AG04450 (cell line): ENCODE measurements at regions of chr22 and their contacts with region 1.

Region 1: DNA sequence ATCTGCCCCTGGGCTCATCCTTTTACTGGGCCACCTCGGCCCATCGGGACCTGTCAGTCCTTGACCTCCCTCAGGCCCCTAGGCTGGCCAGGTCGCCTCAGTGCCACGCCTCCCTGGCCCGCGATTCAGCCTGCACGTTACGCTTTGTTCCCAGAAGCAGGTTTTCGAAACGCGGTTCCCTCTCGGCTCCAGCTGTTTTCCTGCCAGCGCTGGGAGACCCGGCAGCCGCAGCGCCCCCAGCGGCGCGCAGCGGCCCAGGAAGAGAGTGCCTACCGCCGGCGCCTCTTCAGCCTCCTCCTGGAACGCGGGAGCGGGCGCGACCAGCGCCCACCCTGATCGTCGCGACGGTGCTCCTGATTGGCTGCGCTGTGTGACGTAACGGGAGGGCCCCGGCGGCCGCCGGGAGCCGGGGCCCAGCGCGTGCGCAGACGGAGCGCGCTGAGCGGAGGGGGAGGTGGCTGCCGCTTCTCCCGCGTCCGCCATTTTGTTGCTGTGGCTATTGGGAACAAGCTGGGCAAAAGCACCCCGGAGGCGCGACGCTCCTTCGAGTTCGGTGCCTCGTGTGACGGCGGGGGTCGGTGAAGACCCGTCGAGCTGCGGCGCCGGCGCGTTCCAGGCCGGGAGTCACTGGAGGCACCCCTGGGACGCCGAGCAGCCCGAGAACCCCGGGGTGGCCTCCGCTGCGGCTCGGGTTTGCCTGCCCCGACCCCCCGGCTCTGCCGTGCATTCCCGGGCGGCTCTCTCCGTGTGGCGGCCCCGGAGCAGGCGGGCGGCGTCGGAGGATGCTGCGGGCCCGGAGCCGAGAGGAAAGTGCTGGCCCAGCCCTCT is at the start of gene CRKL:
- DNase-seq: peak; percentile 93
- H3K4me3 ChIP-seq: peak within 1 kb of the TSS; percentile 70
- H3K27ac ChIP-seq: peak within 1 kb of the TSS; percentile 94
- H3K27me3 ChIP-seq: no peaks in the 10 kb centered on the region
- CTCF ChIP-seq: peak; percentile 94
- polyA plus RNA-seq, gene CRKL: 24.1 and 25.4 TPM in 2 replicates

Region 2: DNA sequence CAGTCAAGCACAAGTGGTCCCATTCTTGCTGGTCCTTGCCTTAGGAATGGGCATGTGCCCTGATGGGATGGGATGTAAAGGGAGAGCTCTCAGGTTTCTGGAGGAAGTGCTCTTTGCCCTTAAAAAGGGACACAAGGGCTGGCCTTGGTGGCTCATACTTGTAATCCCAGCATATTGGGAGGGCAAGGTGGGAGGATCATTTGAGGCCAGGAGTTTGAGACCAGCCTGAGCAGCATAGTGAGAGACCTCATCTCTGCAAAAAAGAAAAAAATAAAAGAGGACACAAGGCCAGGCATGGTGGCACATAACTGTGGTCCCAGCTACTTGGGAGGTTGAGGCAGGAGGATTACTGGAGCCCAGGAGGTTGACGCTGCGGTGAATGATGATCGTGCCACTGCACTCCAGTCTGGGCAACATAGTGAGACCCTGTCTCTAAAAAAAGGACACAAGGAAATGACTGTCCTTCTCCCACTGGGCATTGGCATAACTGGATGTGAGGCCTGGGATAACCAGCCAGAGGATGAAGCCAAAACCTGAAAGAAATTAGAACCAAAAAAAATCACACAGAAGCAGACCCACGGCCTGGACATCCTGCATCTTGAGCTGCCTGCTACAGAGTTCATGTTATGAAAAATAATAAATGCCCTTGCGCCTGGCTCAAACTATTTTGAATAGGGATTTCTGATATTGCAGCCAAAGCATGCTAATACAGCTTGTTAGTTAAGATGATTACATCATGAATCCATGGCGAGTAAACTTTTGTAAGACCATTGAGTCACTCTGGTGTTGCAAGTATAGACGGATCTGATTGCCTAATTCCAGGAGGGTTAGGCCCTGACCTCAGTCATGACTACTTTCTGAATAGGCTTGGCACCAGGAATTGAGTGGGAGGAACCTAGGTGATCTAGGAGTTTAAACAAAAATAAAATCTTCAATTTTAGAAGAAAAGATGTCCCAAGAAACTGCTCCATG is 12.9 kb before region 1 on chr22:
- CTCF ChIA-PET with region 1: interaction called, 17 read pairs
- POLR2A ChIA-PET with region 1: interaction called, 4 read pairs
- DNase-seq: peak; percentile 91
- H3K4me3 ChIP-seq: no peak overlapping the region
- H3K27ac ChIP-seq: peak overlapping the region; percentile 69
- H3K27me3 ChIP-seq: no peaks in the 10 kb centered on the region
- CTCF ChIP-seq: no peak

Region 3: GRCh38 chr22:21102659-21103267 is 185.6 kb after region 1 on chr22:
- CTCF ChIA-PET with region 1: no interaction called
- POLR2A ChIA-PET with region 1: no interaction called
- DNase-seq: no peak
- H3K4me3 ChIP-seq: no peak overlapping the region
- H3K27ac ChIP-seq: no peak overlapping the region
- H3K27me3 ChIP-seq: peaks cover 2% of the 10 kb centered on the region
- CTCF ChIP-seq: peak; percentile 69